Activated CD4-positive, alpha-beta T cell treated with anti-CD3 and anti-CD28 coated beads, Interleukin-2, amount 10 ng/mL, durations not matched to agents 24 days and 14 days (primary cell): ENCODE measurements at regions of chr2 and their contacts with region 1.

Region 1: DNA sequence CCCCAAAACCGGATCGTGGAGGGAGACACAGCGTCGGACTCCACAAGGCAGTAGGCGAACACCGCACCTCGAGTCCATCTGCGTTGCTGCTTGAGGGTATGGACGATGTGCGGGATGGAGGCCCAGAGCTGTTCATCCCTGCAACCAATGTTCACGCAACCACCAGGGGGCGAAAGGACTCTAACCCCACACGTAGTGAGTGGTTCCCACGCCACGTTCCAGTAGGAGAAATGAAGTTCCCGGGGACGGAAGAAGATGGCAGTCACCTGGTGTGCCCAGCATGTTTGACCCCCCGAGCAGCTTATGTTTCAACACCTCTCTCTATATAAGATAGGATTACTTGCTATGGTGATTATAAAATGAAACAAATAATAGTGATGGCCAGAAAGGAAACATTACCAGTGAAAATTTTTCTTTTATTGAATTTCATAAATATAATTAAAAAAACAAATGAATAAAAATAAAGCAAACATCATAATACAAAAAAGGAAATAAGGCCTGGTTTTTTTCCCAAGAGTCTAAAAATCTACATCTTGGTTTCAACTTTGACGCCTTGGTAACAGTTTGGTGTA is 184.3 kb downstream of the SH3BP4 start:
- DNase-seq: peak; percentile 79
- H3K4me3 Mint-ChIP-seq: no peak overlapping the region
- H3K27ac Mint-ChIP-seq: no peak overlapping the region
- H3K4me1 Mint-ChIP-seq: peaks cover 2% of the 10 kb centered on the region
- H3K27me3 Mint-ChIP-seq: peaks cover 5% of the 10 kb centered on the region

Region 2: GRCh38 chr2:235171550-235172031 is 35.5 kb after region 1 on chr2:
- intact Hi-C with region 1: no loop called
- DNase-seq: no peak
- H3K4me3 Mint-ChIP-seq: no peak overlapping the region
- H3K27ac Mint-ChIP-seq: no peak overlapping the region
- H3K4me1 Mint-ChIP-seq: no peaks in the 10 kb centered on the region
- H3K27me3 Mint-ChIP-seq: no peaks in the 10 kb centered on the region

Region 3: DNA sequence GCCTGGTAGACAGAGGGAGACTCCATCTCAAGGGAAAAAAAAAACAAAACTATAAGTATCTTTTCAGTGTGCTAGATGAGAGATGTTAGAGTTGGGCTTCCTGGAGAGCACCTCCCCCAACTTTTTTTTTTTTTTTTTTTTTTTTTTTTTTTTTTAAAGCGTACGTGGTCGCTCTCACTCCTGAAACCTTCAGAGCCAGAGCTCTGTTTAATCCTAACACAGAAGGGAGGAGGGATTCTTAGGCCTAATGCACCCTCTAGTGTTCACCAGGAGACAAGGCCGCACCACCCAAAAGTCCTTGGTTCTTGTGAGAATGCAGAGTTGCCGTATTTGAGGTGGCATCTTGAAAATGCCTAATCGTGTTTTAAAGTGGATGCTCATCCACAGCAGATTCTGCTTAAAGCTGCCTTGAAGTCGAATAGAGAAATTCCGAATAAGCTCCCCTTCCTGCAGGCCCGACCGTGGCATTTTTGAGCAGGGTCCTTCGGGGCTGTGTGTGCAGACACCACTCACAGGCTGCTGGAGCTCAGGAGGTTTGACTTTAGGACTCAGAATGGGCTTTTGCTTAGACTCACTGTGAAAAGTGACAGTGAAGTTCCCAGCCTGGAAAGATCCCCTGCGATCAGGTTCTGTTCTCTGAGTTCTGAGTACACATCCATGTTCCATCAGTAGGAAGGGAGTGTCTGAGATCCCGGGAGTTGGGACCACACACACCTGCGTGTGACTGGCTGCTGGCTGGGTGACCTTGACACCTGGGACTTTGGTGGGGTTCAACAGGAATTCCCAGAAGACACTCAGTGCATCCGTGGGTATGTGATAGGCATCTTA is 610.4 kb after region 1 on chr2:
- intact Hi-C with region 1: loop called (anchors 10 kb)
- DNase-seq: peak; percentile 84
- H3K4me3 Mint-ChIP-seq: no peak overlapping the region
- H3K27ac Mint-ChIP-seq: no peak overlapping the region
- H3K4me1 Mint-ChIP-seq: no peaks in the 10 kb centered on the region
- H3K27me3 Mint-ChIP-seq: peaks cover 6% of the 10 kb centered on the region